Left ventricle myocardium inferior (tissue), 1 donor: ENCODE measurements at regions of chr4 and their contacts with region 1.

Region 1: GRCh38 chr4:86895692-86896488 is 3.7 kb upstream of the C4orf36 start:
- DNase-seq: no peak
- H3K4me3 ChIP-seq: no peak overlapping the region
- H3K27ac ChIP-seq: no peak overlapping the region
- H3K4me1 ChIP-seq: peaks cover 18% of the 10 kb centered on the region
- H3K27me3 ChIP-seq: no peaks in the 10 kb centered on the region
- CTCF ChIP-seq: peak; percentile 87

Region 2: GRCh38 chr4:86497980-86498862 is 397.7 kb before region 1 on chr4:
- intact Hi-C with region 1: loop called (anchors 5 kb)
- DNase-seq: no peak
- H3K4me3 ChIP-seq: no peak overlapping the region
- H3K27ac ChIP-seq: no peak overlapping the region
- H3K4me1 ChIP-seq: peaks cover 16% of the 10 kb centered on the region
- H3K27me3 ChIP-seq: no peaks in the 10 kb centered on the region
- CTCF ChIP-seq: peak; percentile 84

Region 3: DNA sequence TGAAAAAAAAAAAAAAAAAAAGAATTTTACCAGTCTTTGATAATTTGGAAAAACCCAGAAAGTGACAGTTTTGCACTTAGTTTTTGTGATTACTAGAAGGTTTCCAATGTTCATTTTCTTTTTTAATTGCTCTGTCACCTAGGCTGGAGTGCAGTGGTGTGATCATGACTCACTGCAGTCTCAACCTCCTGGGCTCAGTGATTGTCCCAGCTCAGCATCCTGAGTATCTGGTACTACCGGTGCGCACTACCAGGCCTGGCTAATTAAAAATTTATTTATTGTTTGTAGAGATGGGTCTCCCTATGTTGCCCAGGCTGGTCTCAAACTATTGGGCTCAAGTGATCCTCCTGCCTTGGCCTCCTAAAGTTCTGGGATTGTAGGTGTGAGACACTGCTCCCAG is 529.8 kb after region 1 on chr4:
- intact Hi-C with region 1: no loop called
- DNase-seq: no peak
- H3K4me3 ChIP-seq: no peak overlapping the region
- H3K27ac ChIP-seq: no peak overlapping the region
- H3K4me1 ChIP-seq: peaks cover 61% of the 10 kb centered on the region
- H3K27me3 ChIP-seq: no peaks in the 10 kb centered on the region
- CTCF ChIP-seq: no peak